Breast epithelium (tissue), 4 donors: ENCODE measurements at regions of chr2 and their contacts with region 1.

Region 1: DNA sequence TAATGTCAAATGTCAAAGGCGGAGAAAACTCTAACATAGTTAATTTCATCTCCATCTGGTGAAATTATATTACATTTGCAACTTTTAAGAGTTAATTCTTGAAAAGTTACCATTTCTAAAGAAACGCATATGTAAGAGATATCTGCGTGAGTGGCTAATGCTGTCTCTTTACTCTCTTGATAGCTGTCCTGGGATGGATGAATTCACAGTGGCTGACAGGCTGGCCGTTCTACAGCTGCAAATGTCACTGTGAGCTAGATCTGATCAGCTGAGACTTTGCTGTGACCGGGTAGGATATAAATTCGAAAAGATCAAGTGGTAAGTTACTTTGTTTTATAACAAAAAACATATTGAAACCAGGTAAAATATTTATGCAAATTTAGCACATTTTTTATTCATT is 557.1 kb upstream of the DDX18 start:
- DNase-seq: no peak
- H3K4me3 ChIP-seq: no peak overlapping the region
- H3K27ac ChIP-seq: no peak overlapping the region
- H3K4me1 ChIP-seq: no peaks in the 10 kb centered on the region
- H3K27me3 ChIP-seq: no peaks in the 10 kb centered on the region
- CTCF ChIP-seq: no peak
- POLR2A ChIP-seq: no peak

Region 2: DNA sequence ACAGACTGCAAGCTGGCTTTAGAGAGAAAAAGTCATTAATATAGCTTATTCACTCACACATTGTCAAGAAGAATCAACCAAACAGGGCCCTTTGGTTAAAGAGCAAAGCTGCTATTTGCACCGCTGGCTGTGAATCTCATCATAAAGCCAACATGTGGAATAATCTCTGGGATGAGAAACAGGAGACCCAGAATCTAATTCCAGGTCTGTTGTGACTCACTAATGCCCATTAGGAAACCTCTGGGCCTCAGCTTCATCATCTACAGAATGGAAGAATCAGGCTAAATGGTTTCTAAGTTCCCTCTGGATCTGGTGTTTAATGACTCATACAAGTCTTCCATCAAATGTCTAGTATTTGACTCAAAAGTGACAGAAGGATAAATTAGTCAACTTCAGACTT is 34.6 kb before region 1 on chr2:
- intact Hi-C with region 1: no loop called
- DNase-seq: no peak
- H3K4me3 ChIP-seq: no peak overlapping the region
- H3K27ac ChIP-seq: no peak overlapping the region
- H3K4me1 ChIP-seq: no peaks in the 10 kb centered on the region
- H3K27me3 ChIP-seq: no peaks in the 10 kb centered on the region
- CTCF ChIP-seq: no peak
- POLR2A ChIP-seq: no peak

Region 3: DNA sequence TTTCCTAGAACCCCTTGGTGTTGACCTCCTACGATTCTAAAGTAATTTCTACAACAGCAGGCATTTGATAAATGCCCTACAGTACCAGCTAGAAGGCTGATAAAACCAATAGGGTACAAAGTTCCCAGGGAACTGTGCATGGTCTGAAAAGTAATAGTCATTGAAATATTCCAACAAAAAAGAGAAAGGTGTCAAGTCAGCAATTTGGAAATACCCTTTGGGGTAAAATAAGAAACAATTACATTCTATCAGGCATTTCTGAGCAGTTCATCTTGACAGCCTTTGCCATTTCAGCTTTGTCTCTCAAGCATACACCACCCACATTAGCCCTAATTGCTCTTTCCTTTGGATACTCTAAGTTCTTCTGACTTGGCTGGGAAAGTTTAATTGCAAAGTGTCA is 14.3 kb after region 1 on chr2:
- intact Hi-C with region 1: loop called (anchors 2 kb)
- DNase-seq: no peak
- H3K4me3 ChIP-seq: no peak overlapping the region
- H3K27ac ChIP-seq: no peak overlapping the region
- H3K4me1 ChIP-seq: no peaks in the 10 kb centered on the region
- H3K27me3 ChIP-seq: no peaks in the 10 kb centered on the region
- CTCF ChIP-seq: no peak
- POLR2A ChIP-seq: no peak

Region 4: DNA sequence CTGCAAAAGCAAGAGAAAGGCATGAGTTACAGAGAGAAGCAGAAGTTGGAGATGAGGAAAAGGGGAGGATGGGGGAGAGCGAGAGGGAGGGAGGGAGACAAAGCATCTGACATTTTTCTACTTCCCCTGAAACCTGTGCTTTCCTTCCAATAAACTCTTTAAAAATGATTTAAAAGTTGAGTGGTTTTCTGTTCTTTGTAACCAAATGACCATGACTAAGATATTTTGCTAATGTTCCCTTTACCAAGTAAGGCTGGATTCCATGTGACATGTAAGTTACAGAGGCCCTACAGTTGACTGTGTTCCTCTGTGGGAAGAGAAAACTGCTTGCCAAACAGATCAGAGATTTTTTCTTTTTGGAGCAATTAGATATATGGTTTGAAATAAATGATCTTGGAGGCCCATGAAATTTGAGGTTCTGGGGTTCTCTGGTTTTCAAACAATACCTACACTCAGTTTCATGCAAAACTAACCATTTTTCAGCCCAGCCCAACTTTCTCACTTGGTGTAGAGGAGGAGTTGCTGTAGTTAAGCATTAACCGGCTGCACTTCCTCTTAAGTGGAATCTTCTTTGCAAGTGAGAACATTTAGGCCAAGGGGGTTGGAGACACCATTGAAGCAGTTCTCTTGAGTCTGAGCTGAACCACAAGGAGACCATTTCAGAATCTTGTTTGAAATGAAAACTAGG is 865.4 kb after region 1 on chr2:
- intact Hi-C with region 1: no loop called
- DNase-seq: no peak
- H3K4me3 ChIP-seq: no peak overlapping the region
- H3K27ac ChIP-seq: no peak overlapping the region
- H3K4me1 ChIP-seq: peaks cover 0 to 5% of the 10 kb centered on the region in 2 donors
- H3K27me3 ChIP-seq: no peaks in the 10 kb centered on the region
- CTCF ChIP-seq: no peak
- POLR2A ChIP-seq: no peak